HEK293 (cell line): ENCODE measurements at regions of chr20 and their contacts with region 1.

Region 1: GRCh38 chr20:63574156-63574828 is at the start of gene HELZ2:
- H3K4me3 ChIP-seq: peak within 1 kb of the TSS; percentile 70
- H3K27ac ChIP-seq: peak within 1 kb of the TSS; percentile 37; the same call in 1 of the 2 replicates
- H3K4me1 ChIP-seq: 0 out of 2 replicates have a peak, but pooled peaks cover 3% of the 10 kb centered on the region
- CTCF ChIP-seq: no peak

Region 2: DNA sequence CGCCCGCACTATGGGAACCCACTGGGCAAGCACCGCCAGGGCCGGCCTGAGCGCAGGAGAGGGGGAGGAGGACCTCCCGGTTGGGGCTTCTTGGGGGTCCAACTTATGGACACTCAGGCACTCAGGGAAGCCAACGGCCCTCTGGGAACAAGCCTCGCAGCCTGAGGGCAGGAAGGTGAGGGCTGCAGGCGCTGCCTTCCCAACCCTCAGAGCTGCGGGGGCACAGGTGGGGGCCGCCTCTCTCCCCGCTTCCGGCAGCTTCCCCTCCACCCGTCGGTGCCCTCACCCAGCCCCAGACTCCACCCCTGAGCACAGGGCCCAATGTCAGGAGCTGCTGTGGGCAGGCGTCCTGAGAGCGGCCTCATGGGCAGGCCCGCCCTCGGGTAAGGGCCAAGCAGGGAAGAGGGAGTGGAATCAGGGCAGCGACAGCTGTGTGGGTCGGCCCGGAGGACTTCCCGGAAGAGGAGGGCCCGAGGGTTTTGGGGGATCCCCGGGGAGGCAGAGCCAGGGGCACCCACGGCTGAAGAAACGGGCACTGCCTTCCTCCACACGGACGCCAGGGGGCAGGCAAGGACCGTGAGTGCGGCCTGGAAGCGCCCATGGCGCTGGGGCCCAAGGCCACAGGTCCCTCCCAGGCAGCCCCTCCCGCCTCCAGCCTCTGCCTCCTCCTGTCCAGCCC is 36.6 kb before region 1 on chr20:
- CTCF ChIA-PET with region 1: no interaction called
- POLR2A ChIA-PET with region 1: interaction called, 12 read pairs
- H3K4me3 ChIP-seq: peak overlapping the region; percentile 23
- H3K27ac ChIP-seq: no peak overlapping the region
- H3K4me1 ChIP-seq: no peaks in the 10 kb centered on the region
- CTCF ChIP-seq: peak; percentile 99

Region 3: GRCh38 chr20:63648190-63648589 is 73.9 kb after region 1 on chr20:
- CTCF ChIA-PET with region 1: no interaction called
- POLR2A ChIA-PET with region 1: no interaction called
- H3K4me3 ChIP-seq: no peak overlapping the region
- H3K27ac ChIP-seq: no peak overlapping the region
- H3K4me1 ChIP-seq: no peaks in the 10 kb centered on the region; the same call in 1 of the 2 replicates
- CTCF ChIP-seq: no peak

Region 4: DNA sequence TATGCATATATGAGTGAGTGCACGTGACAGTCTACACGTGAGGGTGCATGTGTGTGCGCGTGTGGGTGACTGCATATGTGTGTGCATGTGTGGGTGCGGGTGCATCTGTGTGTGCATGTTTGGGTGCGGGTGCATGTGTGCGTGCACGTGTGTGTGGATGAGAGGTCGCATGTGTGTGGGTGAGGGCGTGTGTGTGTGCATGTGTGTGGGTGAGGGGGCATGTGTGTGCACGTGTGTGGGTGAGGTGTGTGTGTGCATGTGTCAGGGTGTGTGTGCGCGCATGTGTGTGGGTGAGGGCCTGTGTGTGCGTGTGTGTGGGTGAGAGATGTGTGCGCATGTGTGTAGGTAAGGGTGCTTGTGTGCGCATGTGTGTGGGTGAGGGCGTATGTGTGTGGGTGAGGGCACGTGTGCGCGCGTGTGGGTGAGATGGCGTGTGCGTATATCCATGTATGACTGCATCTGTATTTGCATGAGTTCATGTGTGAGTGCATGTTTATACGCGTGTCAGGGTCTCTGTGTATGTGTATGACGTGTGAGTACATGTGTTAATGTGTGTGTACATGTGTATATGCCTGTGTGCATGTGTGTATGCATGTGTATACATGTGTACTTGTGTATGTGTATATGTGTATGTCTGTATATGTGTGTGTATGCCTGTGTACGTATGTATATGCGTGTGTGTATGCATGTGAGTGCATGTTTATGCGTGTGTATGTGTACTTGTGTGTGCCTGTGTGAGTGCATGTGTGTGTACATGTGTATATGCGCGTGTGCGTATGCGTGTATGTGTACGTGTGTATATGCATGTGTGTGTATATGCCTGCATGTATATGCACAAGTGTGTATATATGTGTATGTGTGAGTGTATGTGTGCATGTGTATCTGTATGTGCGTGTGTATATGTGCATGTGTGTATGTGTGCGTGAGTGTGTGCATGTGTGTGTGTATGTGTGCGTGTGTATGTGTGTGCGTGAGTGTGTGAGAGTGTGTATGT is 158.1 kb after region 1 on chr20:
- CTCF ChIA-PET with region 1: no interaction called
- POLR2A ChIA-PET with region 1: no interaction called
- H3K4me3 ChIP-seq: no peak overlapping the region
- H3K27ac ChIP-seq: no peak overlapping the region
- H3K4me1 ChIP-seq: no peaks in the 10 kb centered on the region
- CTCF ChIP-seq: no peak